Activated T-helper 2 cell treated with anti-CD3 and anti-CD28 coated beads, Interferon-gamma antibody, Interleukin-2, Interleukin-4, amounts not matched to agents 10 μg/mL and 5 μg/mL and 100 μg/mL, durations not matched to agents 14 hours and 24 hours and 36 hours (primary cell): ENCODE measurements at regions of chr9 and their contacts with region 1.

Region 1: GRCh38 chr9:69667306-69667705 is 4.9 kb downstream of the APBA1 start:
- DNase-seq: no peak
- H3K4me3 Mint-ChIP-seq: no peak overlapping the region
- H3K27ac Mint-ChIP-seq: no peak overlapping the region
- H3K4me1 Mint-ChIP-seq: peaks cover 9% of the 10 kb centered on the region
- H3K27me3 Mint-ChIP-seq: peaks cover 39% of the 10 kb centered on the region

Region 2: DNA sequence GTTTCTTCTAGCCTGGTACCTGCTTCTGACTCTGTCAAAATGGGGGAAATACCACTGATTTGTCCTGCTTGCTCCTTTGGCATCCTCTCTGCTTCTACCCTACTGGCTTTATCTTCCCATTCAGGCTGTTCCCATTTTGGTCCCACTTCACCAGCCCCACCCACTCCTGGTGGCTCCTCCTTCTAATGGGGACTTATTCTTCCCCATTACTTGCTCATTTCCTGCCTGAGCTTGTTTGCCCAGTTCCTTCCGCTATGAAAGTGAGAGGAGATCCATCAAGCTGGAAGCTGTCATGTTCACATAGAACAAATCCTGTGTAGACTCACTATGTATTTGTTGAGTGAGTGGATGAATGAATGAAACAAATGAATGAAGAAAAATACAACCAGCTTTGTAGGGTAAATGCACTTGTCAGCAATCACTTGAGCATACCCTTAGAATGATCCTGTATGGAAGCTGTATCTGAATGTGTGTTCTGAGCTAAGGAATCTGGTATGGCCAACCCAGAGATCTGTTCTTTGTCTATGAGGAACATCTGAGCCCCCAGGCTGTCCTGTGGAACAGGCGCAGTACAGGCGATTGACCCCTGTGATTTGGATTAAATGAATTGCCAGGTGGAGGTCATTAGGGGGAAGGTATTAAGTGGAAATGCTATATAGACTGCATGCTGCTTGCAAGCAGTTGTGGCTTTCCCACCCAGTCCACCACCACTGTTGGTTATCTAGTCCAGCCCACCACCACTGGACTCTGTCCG is 84.6 kb before region 1 on chr9:
- intact Hi-C with region 1: loop called (anchors 10 kb)
- DNase-seq: no peak
- H3K4me3 Mint-ChIP-seq: no peak overlapping the region
- H3K27ac Mint-ChIP-seq: no peak overlapping the region
- H3K4me1 Mint-ChIP-seq: peaks cover 11% of the 10 kb centered on the region
- H3K27me3 Mint-ChIP-seq: no peaks in the 10 kb centered on the region

Region 3: DNA sequence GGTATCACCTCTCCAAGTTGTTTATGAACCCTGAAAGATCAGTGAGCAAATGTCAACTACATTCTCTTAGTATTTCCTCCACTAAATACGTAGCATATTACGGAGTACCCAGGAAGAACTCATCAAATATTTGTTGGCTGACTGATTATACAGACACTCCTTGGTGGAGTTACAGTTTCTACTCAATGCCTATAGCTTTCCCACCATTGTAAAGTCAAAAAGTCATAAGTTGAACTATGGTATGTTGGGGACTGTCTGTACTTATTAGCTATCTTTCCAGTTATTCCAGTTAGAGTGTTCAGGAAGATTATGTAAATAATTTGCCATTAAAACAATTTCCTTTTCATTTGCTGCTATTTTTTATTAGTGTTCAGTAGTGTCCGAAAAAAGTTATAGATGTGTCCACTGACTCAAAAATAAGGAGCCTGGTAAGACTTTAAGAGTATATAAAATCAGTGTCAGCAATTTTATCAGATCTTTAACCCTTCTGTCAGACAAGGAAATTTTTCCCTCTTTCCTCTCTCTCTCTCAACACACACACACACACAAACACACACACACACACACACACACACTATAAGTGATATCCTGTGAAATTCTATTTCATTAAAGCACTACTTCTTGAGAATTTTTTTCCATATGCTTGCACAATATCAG is 11.7 kb after region 1 on chr9:
- intact Hi-C with region 1: no loop called
- DNase-seq: no peak
- H3K4me3 Mint-ChIP-seq: no peak overlapping the region
- H3K27ac Mint-ChIP-seq: no peak overlapping the region
- H3K4me1 Mint-ChIP-seq: peaks cover 9% of the 10 kb centered on the region
- H3K27me3 Mint-ChIP-seq: peaks cover 28% of the 10 kb centered on the region